ENCODE measurements at regions of chr5 and their contacts with region 1.

Region 1: DNA sequence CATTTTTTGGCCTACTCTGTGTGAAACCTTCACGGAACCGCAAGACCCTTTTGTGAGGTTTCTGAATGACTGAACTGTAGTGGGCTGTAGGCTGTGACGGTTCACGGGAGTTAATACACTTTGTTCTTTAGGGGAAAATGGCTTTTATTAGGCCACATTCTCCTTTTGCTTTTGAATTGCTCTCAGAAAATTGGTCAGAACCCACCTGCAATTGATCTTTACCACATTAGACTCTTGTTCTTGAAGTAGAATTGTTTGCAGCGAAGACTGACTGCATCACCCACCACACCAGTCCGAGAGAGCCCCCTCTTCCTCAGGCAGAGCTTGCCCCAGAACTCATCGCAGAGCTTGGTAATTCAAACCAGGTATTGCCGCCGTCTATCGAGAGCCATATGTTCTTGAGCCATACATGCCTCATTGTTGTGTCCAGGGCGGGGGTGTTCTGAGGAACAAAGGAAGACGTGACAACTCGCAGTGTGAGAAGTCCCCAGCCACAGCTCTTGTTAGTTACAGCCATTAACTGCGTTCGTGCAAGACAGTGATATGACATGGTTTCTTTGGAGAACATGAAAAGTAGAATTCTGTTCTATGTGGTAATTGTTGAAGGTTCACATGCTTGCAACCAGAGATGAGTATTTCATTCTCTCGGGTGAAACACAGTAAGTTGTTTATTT is 166.4 kb upstream of the OTULINL start:
- DNase-seq: peak; percentile 65
- H3K4me3 Mint-ChIP-seq: peak overlapping the region; percentile 67
- H3K27ac Mint-ChIP-seq: peak overlapping the region; percentile 94
- H3K4me1 Mint-ChIP-seq: peaks cover 52% of the 10 kb centered on the region
- H3K27me3 Mint-ChIP-seq: peaks cover 18% of the 10 kb centered on the region

Region 2: DNA sequence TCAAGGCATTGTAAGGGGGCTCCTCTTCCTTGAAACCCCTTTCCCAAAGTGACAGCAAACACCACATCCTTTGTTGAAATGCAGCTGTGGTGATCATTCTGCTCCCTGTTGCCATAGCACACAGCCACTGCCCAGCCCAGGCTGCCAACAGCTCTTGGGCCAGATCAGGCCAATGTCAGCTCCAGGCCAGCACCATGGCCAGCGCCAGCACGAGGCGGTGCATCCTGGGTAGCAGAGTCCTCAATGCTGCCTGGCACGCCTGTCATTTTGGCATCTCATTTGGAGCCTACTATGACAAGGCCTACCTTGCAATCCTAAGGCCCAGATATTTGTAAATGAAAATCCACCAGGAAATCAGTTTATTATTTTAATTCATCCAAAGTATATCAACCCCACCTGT is 861.3 kb before region 1 on chr5:
- CTCF ChIA-PET with region 1: no interaction called
- POLR2A ChIA-PET with region 1: no interaction called
- intact Hi-C with region 1: no loop called
- DNase-seq: no peak
- H3K4me3 Mint-ChIP-seq: no peak overlapping the region
- H3K27ac Mint-ChIP-seq: no peak overlapping the region
- H3K4me1 Mint-ChIP-seq: no peaks in the 10 kb centered on the region
- H3K27me3 Mint-ChIP-seq: no peaks in the 10 kb centered on the region

Region 3: DNA sequence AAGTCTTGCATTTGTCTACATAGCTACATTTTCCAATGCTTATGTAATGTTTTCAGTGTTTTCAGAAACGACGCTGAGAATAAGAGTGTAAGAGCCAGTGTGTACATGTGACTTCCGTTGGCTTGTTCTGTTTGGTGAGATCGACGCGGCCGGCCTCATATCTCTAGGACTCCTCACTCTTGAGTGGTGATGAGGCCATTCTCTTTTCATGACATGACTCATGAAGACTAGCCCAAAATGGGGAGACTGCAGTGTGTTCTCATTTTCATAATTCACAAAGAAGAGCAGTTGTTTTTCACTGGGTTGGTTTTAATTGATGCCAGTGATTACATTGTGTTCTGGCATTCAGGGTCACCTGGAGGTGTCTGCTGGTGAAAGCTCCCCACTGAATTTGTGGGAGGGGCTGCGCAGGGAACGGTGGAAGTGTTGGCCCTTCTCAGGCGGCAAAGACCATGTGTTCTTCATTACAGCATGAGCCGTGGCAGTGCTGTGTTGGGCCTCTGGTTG is 34.9 kb after region 1 on chr5:
- CTCF ChIA-PET with region 1: interaction called, 3 read pairs
- POLR2A ChIA-PET with region 1: no interaction called
- intact Hi-C with region 1: loop called (anchors 5 kb)
- DNase-seq: peak; percentile 60
- H3K4me3 Mint-ChIP-seq: no peak overlapping the region
- H3K27ac Mint-ChIP-seq: peak overlapping the region; percentile 23
- H3K4me1 Mint-ChIP-seq: peaks cover 4% of the 10 kb centered on the region
- H3K27me3 Mint-ChIP-seq: no peaks in the 10 kb centered on the region

Region 4: DNA sequence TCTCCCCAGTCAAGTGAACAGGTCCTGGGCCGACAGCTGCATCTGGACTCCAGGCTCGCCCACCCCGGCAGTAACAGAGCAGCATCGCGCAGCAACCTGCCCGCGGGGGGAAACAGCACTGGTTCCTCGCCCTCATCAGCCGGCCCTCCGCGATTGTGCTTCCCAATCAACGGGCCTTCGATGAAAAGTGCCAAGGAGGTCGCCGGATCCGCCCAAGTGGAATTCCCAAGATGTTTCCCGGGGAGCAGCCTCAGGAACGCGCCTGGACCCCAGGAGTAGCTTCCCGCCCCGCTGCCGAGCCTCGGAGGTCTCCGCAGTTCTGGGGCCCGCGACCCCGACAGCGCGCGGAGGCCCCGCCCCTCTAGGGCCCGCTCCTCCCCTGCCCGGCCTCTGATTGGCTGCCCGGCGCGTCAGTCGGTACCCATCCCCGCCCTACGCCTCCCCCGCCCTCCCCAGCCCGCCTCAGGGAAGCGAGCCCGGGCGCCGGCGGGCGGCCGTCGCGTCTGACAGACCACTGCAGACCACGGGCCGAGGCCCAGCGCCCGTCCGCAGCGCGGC is 166.3 kb after region 1 on chr5 and contains the start of gene OTULINL:
- CTCF ChIA-PET with region 1: no interaction called
- POLR2A ChIA-PET with region 1: interaction called, 12 read pairs
- intact Hi-C with region 1: loop called (anchors 5 kb)
- DNase-seq: peak; percentile 91
- H3K4me3 Mint-ChIP-seq: peak within 1 kb of the TSS; percentile 77
- H3K27ac Mint-ChIP-seq: no peak within 1 kb of the TSS
- H3K4me1 Mint-ChIP-seq: peaks cover 27% of the 10 kb centered on the region
- H3K27me3 Mint-ChIP-seq: peaks cover 9% of the 10 kb centered on the region
- total RNA-seq, gene OTULINL: 12.2 to 12.3 TPM

Region 5: DNA sequence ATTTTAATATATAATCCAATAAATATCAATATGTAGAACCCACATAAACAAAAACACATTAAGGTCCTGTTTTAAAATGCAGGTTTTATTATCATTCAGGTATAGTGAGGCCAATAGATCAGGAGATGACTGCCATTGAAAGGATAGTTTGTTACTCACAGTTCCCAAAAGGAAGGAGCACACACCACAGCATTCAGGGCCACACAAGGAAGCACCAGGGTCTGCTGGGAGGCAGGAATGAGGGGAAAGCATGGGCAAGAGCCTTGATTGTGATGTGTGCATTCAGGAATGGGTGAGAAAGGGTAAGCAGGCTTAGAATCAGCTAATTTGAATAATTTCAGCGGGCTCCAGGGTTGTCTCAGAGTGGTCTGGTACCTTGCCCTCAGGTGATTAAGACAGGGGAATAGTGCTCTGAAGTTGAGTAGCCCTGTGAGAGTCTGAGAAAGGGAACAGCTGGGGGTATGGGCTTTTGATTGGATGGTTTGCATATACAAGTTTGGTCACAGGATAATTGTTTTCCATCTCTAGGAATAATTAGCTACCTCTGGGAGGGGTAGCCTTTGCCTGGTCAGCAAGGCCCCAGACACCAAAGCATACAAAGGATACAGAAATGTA is 229.6 kb after region 1 on chr5:
- CTCF ChIA-PET with region 1: interaction called, 33 read pairs
- POLR2A ChIA-PET with region 1: no interaction called
- intact Hi-C with region 1: no loop called
- DNase-seq: no peak
- H3K4me3 Mint-ChIP-seq: no peak overlapping the region
- H3K27ac Mint-ChIP-seq: no peak overlapping the region
- H3K4me1 Mint-ChIP-seq: no peaks in the 10 kb centered on the region
- H3K27me3 Mint-ChIP-seq: peaks cover 17% of the 10 kb centered on the region

Region 6: GRCh38 chr5:14809369-14810155 is 394.4 kb after region 1 on chr5:
- CTCF ChIA-PET with region 1: no interaction called
- POLR2A ChIA-PET with region 1: no interaction called
- intact Hi-C with region 1: loop called (anchors 1 kb)
- DNase-seq: peak; percentile 90
- H3K4me3 Mint-ChIP-seq: peak overlapping the region; percentile 74
- H3K27ac Mint-ChIP-seq: peak overlapping the region; percentile 80
- H3K4me1 Mint-ChIP-seq: peaks cover 57% of the 10 kb centered on the region
- H3K27me3 Mint-ChIP-seq: no peaks in the 10 kb centered on the region

Region 7: DNA sequence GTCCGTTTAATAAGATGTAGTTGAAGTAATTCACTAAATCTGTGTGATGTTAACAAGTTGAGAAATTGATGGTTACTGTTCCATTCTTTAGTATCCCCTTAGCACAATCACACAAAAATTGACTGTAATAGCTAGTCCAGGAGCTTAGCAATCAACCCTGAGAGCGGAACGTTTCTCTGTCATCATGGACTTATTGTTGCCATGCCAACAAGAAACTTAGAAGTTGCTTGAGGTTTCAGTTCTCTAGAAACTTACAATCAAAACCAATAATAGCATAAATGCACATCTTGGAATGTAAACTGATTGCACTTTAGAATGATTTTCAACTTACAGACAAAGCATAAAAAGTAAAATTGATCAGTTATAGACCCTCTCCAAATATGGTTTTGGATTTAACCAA is 581.8 kb after region 1 on chr5:
- CTCF ChIA-PET with region 1: no interaction called
- POLR2A ChIA-PET with region 1: no interaction called
- intact Hi-C with region 1: loop called (anchors 2 kb)
- DNase-seq: no peak
- H3K4me3 Mint-ChIP-seq: no peak overlapping the region
- H3K27ac Mint-ChIP-seq: no peak overlapping the region
- H3K4me1 Mint-ChIP-seq: peaks cover 21% of the 10 kb centered on the region
- H3K27me3 Mint-ChIP-seq: no peaks in the 10 kb centered on the region